T-cell (primary cell): ENCODE measurements at regions of chr15 and their contacts with region 1.

Region 1: GRCh38 chr15:66429117-66429516 is 42.4 kb downstream of the MAP2K1 start:
- DNase-seq: no peak
- ATAC-seq: no peak
- H3K4me3 ChIP-seq: no peak overlapping the region
- H3K4me3 Mint-ChIP-seq: no peak overlapping the region
- H3K27ac ChIP-seq: no peak overlapping the region
- H3K27ac Mint-ChIP-seq: no peak overlapping the region
- H3K4me1 ChIP-seq: peaks cover 15 to 16% of the 10 kb centered on the region in 2 experiments
- H3K4me1 Mint-ChIP-seq: peaks cover 70 to 76% (median 72%) of the 10 kb centered on the region in 3 donors
- H3K27me3 ChIP-seq: no peaks in the 10 kb centered on the region
- H3K27me3 Mint-ChIP-seq: no peaks in the 10 kb centered on the region

Region 2: GRCh38 chr15:66240240-66240794 is 188.8 kb before region 1 on chr15:
- CTCF ChIA-PET with region 1: no interaction called
- POLR2A ChIA-PET with region 1: no interaction called
- DNase-seq: no peak
- ATAC-seq: no peak
- H3K4me3 ChIP-seq: no peak overlapping the region
- H3K4me3 Mint-ChIP-seq: no peak overlapping the region
- H3K27ac ChIP-seq: no peak overlapping the region
- H3K27ac Mint-ChIP-seq: no peak overlapping the region
- H3K4me1 ChIP-seq: no peaks in the 10 kb centered on the region
- H3K4me1 Mint-ChIP-seq: no peaks in the 10 kb centered on the region
- H3K27me3 ChIP-seq: peaks cover 3 to 32% of the 10 kb centered on the region in 2 experiments
- H3K27me3 Mint-ChIP-seq: peaks cover 26 to 37% of the 10 kb centered on the region in 2 donors

Region 3: GRCh38 chr15:66356345-66357236 is 72.5 kb before region 1 on chr15 and contains the start of gene TIPIN:
- CTCF ChIA-PET with region 1: no interaction called
- POLR2A ChIA-PET with region 1: no interaction called
- DNase-seq: peak; percentile 89 to 98 (median 95)
- ATAC-seq: peak; percentile 97 to 99 (median 99)
- H3K4me3 ChIP-seq: peak within 1 kb of the TSS; percentile 84 to 91
- H3K4me3 Mint-ChIP-seq: peak within 1 kb of the TSS; percentile 94 to 97 (median 95)
- H3K27ac ChIP-seq: peak within 1 kb of the TSS; percentile 57
- H3K27ac Mint-ChIP-seq: peak within 1 kb of the TSS; percentile 92 to 94
- H3K4me1 ChIP-seq: peaks cover 4 to 15% of the 10 kb centered on the region in 2 experiments
- H3K4me1 Mint-ChIP-seq: peaks cover 16 to 27% (median 22%) of the 10 kb centered on the region in 3 donors
- H3K27me3 ChIP-seq: no peaks in the 10 kb centered on the region
- H3K27me3 Mint-ChIP-seq: no peaks in the 10 kb centered on the region
- total RNA-seq, gene TIPIN: 3.6 to 8.4 (median 6.6) TPM

Region 4: GRCh38 chr15:66378814-66379430 is 50.2 kb before region 1 on chr15:
- CTCF ChIA-PET with region 1: no interaction called
- POLR2A ChIA-PET with region 1: interaction called in 1 of 2 experiments, 11 read pairs
- DNase-seq: no peak
- ATAC-seq: no peak
- H3K4me3 ChIP-seq: no peak overlapping the region
- H3K4me3 Mint-ChIP-seq: no peak overlapping the region
- H3K27ac ChIP-seq: no peak overlapping the region
- H3K27ac Mint-ChIP-seq: no peak overlapping the region
- H3K4me1 ChIP-seq: no peaks in the 10 kb centered on the region
- H3K4me1 Mint-ChIP-seq: peaks cover 0 to 2% (median 2%) of the 10 kb centered on the region in 3 donors
- H3K27me3 ChIP-seq: no peaks in the 10 kb centered on the region
- H3K27me3 Mint-ChIP-seq: no peaks in the 10 kb centered on the region

Region 5: GRCh38 chr15:66394915-66395314 is 34.2 kb before region 1 on chr15:
- CTCF ChIA-PET with region 1: no interaction called
- POLR2A ChIA-PET with region 1: no interaction called
- DNase-seq: no peak
- ATAC-seq: no peak
- H3K4me3 ChIP-seq: no peak overlapping the region
- H3K4me3 Mint-ChIP-seq: peak overlapping the region in 1 of 3 donors; percentile 48
- H3K27ac ChIP-seq: no peak overlapping the region
- H3K27ac Mint-ChIP-seq: peak overlapping the region; percentile 76 to 87
- H3K4me1 ChIP-seq: peaks cover 37 to 67% of the 10 kb centered on the region in 2 experiments
- H3K4me1 Mint-ChIP-seq: peaks cover 77 to 81% (median 78%) of the 10 kb centered on the region in 3 donors
- H3K27me3 ChIP-seq: no peaks in the 10 kb centered on the region
- H3K27me3 Mint-ChIP-seq: no peaks in the 10 kb centered on the region